CD8-positive, alpha-beta T cell (primary cell): ENCODE measurements at regions of chr1 and their contacts with region 1.

Region 1: DNA sequence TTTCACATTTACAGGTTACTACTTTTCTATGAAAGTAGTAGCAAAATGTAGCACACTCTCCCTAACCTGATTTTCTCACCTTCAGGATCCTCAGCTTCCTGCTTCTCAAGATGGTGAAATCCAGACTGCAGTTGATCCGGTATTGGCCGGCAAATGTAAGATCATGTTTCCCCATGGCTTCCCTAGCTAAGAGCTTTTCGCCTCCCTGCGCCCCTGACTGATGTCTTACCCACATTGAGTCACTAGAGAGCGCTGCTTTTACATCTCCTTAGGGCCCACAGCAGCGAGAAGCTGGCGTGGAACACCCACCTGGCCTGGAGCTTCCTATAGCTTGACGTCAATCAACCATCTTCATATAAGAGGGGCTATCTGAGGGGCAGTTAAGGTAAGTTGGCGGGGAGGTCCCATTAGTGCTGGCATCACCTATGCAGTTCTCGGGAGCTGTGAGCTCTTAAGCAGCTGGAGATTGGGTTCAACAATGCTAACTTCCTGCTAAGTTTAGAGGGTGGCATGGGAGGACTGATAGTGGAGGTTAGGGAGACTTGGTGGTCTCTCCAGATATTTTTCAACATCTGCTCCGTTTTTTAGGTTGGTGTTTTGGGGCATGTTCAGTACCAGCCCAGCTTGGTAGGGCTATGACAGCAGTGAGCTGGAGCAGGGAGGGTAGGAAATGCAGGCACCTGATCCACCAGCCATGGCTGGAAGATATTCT is 5.5 kb downstream of the PTPN7 start:
- DNase-seq: peak in 6 of 9 experiments; percentile 57 to 79 (median 62)
- ATAC-seq: peak; percentile 86
- H3K4me3 ChIP-seq: no peak overlapping the region
- H3K4me3 Mint-ChIP-seq: no peak overlapping the region
- H3K27ac ChIP-seq: peak overlapping the region in 1 of 2 experiments; percentile 14
- H3K27ac Mint-ChIP-seq: peak overlapping the region; percentile 57
- H3K4me1 ChIP-seq: peaks cover 42% of the 10 kb centered on the region
- H3K4me1 Mint-ChIP-seq: peaks cover 43% of the 10 kb centered on the region
- H3K27me3 ChIP-seq: no peaks in the 10 kb centered on the region
- H3K27me3 Mint-ChIP-seq: no peaks in the 10 kb centered on the region
- CTCF ChIP-seq: peak; percentile 58

Region 2: DNA sequence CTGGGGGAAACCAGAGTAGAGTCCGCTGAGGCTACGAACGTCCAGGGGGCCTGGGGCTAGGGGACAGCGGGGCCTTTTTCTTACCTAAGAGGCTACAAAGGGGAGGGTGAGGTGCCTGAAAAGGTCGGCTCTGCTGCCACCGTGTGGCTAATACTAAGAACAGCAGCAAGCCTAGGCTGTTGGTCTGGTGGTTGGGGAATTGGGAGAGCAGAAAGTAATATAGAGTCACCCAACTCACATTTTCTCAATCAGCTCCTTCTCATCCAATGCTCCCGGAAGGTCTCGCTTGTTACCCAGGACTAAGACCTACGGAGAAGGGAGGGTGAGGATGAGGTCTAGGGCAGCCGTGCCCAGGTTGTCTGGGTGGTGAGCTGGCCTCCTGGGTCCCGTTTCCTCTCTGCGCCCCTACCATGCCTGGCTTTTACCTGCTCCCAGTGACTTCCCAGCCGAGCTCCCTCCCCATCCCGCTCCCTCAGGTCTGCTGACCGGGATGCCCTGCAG is 19.7 kb before region 1 on chr1:
- CTCF ChIA-PET with region 1: interaction called, 24 read pairs
- POLR2A ChIA-PET with region 1: no interaction called
- intact Hi-C with region 1: no loop called
- DNase-seq: peak in 8 of 9 experiments; percentile 36 to 74 (median 52)
- ATAC-seq: peak; percentile 93
- H3K4me3 ChIP-seq: no peak overlapping the region
- H3K4me3 Mint-ChIP-seq: no peak overlapping the region
- H3K27ac ChIP-seq: no peak overlapping the region
- H3K27ac Mint-ChIP-seq: no peak overlapping the region
- H3K4me1 ChIP-seq: no peaks in the 10 kb centered on the region
- H3K4me1 Mint-ChIP-seq: peaks cover 10% of the 10 kb centered on the region
- H3K27me3 ChIP-seq: no peaks in the 10 kb centered on the region
- H3K27me3 Mint-ChIP-seq: no peaks in the 10 kb centered on the region
- CTCF ChIP-seq: peak; percentile 90

Region 3: DNA sequence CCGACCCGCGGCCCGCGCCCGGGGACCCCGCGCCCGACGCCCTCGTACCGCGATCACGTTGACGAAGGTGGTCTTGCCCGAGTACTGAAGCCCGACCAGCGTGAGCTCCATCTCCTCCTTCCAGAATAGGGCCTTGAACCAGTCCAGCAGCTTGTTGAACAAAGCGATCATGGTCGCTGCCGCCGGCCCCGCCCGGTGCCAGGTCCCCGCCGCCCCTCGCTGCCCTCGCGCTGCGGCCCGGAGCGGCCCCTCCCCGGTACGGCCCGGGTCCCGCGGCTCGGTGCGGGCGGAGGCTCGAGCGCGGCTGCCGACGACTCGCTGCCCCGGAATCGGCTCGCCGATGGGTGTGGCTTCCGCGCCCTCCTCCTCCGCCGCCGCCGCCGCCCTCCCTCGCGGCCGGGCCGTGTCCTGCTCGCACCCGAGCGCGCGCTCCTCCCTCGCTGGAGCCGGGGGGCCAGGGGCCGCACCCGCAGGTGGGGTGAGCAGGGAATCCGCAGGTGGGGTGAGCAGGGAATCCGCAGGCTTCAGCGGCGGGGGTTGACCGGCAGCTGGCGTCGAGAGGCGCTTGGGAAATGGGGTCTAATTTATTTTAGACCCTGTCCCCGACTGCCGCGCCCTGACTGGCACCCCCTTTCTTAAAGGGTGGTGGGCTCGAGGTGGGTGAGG is 10.4 kb before region 1 on chr1 and contains the start of gene ARL8A:
- CTCF ChIA-PET with region 1: interaction called, 16 read pairs
- POLR2A ChIA-PET with region 1: interaction called, 15 read pairs
- intact Hi-C with region 1: loop called in 1 of 2 experiments (anchors 1 kb)
- DNase-seq: peak; percentile 35 to 79 (median 66)
- ATAC-seq: peak; percentile 76
- H3K4me3 ChIP-seq: peak within 1 kb of the TSS; percentile 64 to 92
- H3K4me3 Mint-ChIP-seq: peak within 1 kb of the TSS; percentile 92
- H3K27ac ChIP-seq: peak within 1 kb of the TSS; percentile 64 to 82
- H3K27ac Mint-ChIP-seq: peak within 1 kb of the TSS; percentile 94
- H3K4me1 ChIP-seq: peaks cover 22% of the 10 kb centered on the region
- H3K4me1 Mint-ChIP-seq: peaks cover 35% of the 10 kb centered on the region
- H3K27me3 ChIP-seq: no peaks in the 10 kb centered on the region
- H3K27me3 Mint-ChIP-seq: no peaks in the 10 kb centered on the region
- CTCF ChIP-seq: no peak
- total RNA-seq, gene ARL8A: 58.4 to 64.2 TPM

Region 4: GRCh38 chr1:202170726-202171125 is 15.8 kb after region 1 on chr1:
- CTCF ChIA-PET with region 1: interaction called, 20 read pairs
- POLR2A ChIA-PET with region 1: interaction called, 5 read pairs
- intact Hi-C with region 1: loop called in 1 of 2 experiments (anchors 2 kb)
- DNase-seq: peak in 1 of 9 experiments; percentile 42
- ATAC-seq: peak; percentile 43
- H3K4me3 ChIP-seq: no peak overlapping the region
- H3K4me3 Mint-ChIP-seq: no peak overlapping the region
- H3K27ac ChIP-seq: no peak overlapping the region
- H3K27ac Mint-ChIP-seq: no peak overlapping the region
- H3K4me1 ChIP-seq: peaks cover 13% of the 10 kb centered on the region
- H3K4me1 Mint-ChIP-seq: peaks cover 6% of the 10 kb centered on the region
- H3K27me3 ChIP-seq: no peaks in the 10 kb centered on the region
- H3K27me3 Mint-ChIP-seq: no peaks in the 10 kb centered on the region
- CTCF ChIP-seq: no peak

Region 5: DNA sequence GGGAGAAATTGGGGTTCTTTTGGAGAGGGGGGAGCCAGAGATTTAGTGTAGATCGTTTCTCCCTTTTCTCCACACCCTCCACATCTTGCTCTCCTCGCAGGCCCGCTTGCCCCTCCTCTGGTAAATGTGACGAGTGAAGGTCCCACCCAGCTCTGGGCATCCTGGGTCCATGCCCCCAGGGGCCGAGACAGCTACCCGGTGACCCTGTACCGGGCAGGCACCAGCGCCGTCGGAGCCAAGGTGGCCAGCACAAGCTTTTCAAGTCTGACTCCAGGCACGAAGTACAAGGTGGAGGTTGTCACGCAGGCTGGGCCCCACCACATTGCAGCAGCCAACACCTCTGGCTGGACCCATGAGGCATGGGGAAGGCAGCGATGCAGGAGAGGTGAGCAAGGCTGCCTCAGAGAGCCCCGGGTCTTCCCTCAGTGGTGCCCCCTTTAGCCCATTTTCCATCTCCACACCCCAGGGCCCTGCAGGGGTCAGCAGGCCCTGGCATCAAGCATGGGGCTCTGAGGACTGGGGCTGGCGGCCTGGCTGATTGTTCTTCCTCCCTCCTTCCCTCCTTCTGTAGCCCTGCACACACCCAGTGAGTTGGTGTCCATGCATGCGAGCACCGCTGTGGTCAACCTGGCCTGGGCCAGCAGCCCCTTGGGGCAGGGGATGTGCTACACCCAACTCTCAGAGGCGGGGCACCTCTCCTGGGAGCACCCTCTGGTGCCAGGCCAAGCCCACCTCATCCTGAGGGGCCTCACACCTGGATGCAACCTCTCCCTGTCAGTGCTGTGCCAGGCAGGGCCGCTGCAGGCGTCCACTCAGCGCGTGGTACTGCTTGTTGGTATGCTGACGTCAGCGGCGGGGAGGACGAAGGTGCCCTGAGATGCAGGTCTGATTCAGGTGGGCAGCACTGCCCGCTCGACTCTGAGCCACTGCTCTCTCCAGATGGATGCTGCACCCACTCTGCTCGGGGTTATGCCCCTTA is 22.3 kb after region 1 on chr1:
- CTCF ChIA-PET with region 1: interaction called, 20 read pairs
- POLR2A ChIA-PET with region 1: interaction called, 5 read pairs
- intact Hi-C with region 1: no loop called
- DNase-seq: no peak
- ATAC-seq: no peak
- H3K4me3 ChIP-seq: no peak overlapping the region
- H3K4me3 Mint-ChIP-seq: no peak overlapping the region
- H3K27ac ChIP-seq: no peak overlapping the region
- H3K27ac Mint-ChIP-seq: no peak overlapping the region
- H3K4me1 ChIP-seq: no peaks in the 10 kb centered on the region
- H3K4me1 Mint-ChIP-seq: no peaks in the 10 kb centered on the region
- H3K27me3 ChIP-seq: no peaks in the 10 kb centered on the region
- H3K27me3 Mint-ChIP-seq: no peaks in the 10 kb centered on the region
- CTCF ChIP-seq: no peak

Region 6: DNA sequence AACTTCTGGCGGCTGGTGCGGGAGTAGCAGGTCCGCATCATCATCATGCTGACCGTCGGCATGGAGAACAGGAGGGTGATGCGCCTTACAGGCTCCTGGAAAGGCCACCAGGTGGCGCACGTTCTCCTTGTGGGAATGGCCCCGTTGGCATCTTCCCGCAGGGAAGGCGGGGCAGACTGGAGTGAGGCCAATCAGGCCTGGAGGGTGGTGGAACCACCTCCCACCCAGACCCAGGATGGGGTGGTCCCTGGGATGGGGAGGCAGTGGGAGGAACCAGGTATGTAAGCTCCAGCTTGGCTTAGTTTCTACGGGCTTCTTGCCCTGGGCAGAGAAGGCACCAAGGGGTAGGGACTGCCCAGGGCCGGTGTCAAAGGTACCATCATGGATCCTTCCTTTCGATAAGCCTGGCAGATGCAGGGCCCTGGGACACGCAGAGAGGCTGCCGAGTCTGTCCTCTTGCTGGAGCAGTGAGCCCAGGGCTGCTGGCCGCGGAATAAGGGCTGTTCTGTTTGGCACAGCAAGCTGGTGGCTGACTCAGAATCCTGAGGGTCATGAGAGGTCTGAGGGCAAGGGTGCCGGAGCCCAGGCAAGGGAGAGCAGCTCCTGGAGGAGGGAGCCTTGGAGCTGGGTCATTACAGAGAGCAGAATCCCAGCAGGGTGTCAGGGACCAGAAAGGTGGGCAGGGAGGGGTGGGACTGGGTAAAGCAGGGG is 30.0 kb after region 1 on chr1:
- CTCF ChIA-PET with region 1: interaction called, 22 read pairs
- POLR2A ChIA-PET with region 1: no interaction called
- intact Hi-C with region 1: loop called (anchors 1 to 2 kb)
- DNase-seq: peak; percentile 24 to 80 (median 70)
- ATAC-seq: peak; percentile 61
- H3K4me3 ChIP-seq: no peak overlapping the region
- H3K4me3 Mint-ChIP-seq: no peak overlapping the region
- H3K27ac ChIP-seq: no peak overlapping the region
- H3K27ac Mint-ChIP-seq: no peak overlapping the region
- H3K4me1 ChIP-seq: peaks cover 13% of the 10 kb centered on the region
- H3K4me1 Mint-ChIP-seq: peaks cover 13% of the 10 kb centered on the region
- H3K27me3 ChIP-seq: no peaks in the 10 kb centered on the region
- H3K27me3 Mint-ChIP-seq: peaks cover 2% of the 10 kb centered on the region
- CTCF ChIP-seq: peak; percentile 64